HCT116 (cell line): ENCODE measurements at regions of chr4 and their contacts with region 1.

Region 1: DNA sequence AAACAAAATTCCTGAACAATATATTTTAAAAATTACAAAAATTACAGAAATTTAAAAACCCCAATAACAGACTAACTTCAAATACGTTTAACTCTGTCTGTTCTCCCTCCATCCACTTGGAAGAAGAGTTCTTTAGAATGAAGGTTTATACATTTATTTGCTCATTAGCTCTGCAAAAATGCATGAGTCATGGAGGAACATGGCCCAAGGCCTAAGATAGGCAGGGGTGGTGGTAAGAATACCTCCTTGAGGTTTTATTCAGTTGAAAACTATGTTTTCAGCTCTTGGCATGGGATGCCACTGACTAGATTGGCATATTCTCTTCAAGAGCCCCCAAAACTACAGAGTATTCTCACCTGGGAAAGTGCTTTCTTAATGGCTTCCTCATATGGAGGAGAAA is 8.8 kb upstream of the LRRC66 start:
- DNase-seq: no peak
- ATAC-seq: no peak
- H3K4me3 ChIP-seq: no peak overlapping the region
- H3K27ac ChIP-seq: no peak overlapping the region
- H3K4me1 ChIP-seq: no peaks in the 10 kb centered on the region; a peak in 1 of 4 replicates
- H3K27me3 ChIP-seq: no peaks in the 10 kb centered on the region
- CTCF ChIP-seq: no peak
- POLR2A ChIP-seq: no peak
- RAD21 ChIP-seq: no peak

Region 2: GRCh38 chr4:51831133-51831532 is 197.8 kb before region 1 on chr4:
- CTCF ChIA-PET with region 1: interaction called, 7 read pairs
- POLR2A ChIA-PET with region 1: no interaction called
- RAD21 ChIA-PET with region 1: no interaction called
- intact Hi-C with region 1: loop called (anchors 1 kb)
- DNase-seq: peak; percentile 36
- ATAC-seq: peak; percentile 94
- H3K4me3 ChIP-seq: no peak overlapping the region
- H3K27ac ChIP-seq: no peak overlapping the region
- H3K4me1 ChIP-seq: no peaks in the 10 kb centered on the region
- H3K27me3 ChIP-seq: peaks cover 23% of the 10 kb centered on the region
- CTCF ChIP-seq: peak; percentile 53 to 79 (median 74); a peak in 5 of 6 replicates
- POLR2A ChIP-seq: no peak
- RAD21 ChIP-seq: peak; percentile 83

Region 3: DNA sequence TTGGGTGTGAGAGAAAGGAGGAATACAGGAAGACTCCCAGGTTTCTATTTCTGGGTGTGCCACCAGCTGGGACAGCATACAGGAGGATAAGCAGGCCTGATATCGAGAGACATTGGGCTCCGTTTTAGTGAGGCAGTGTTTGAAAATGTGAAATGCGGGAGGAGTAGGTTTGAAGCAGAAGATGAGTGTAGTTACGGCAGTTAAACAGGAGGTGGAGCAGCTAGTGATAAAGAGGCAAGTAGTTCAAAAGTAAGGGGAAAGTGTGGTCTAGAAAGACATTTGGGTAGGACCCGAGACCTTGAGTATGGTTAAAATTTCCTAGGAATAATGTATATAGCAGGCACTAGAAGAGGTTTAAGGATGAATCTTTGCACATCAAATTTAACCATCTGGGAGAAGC is 143.6 kb before region 1 on chr4:
- CTCF ChIA-PET with region 1: interaction called, 4 read pairs
- POLR2A ChIA-PET with region 1: no interaction called
- RAD21 ChIA-PET with region 1: no interaction called
- intact Hi-C with region 1: loop called (anchors 1 kb)
- DNase-seq: peak; percentile 13
- ATAC-seq: peak; percentile 80
- H3K4me3 ChIP-seq: no peak overlapping the region
- H3K27ac ChIP-seq: no peak overlapping the region
- H3K4me1 ChIP-seq: no peaks in the 10 kb centered on the region
- H3K27me3 ChIP-seq: no peaks in the 10 kb centered on the region
- CTCF ChIP-seq: peak in 2 of 3 experiments; percentile 36 to 53; a peak in 4 of 6 replicates
- POLR2A ChIP-seq: no peak
- RAD21 ChIP-seq: no peak; the same call in 1 of the 2 replicates

Region 4: DNA sequence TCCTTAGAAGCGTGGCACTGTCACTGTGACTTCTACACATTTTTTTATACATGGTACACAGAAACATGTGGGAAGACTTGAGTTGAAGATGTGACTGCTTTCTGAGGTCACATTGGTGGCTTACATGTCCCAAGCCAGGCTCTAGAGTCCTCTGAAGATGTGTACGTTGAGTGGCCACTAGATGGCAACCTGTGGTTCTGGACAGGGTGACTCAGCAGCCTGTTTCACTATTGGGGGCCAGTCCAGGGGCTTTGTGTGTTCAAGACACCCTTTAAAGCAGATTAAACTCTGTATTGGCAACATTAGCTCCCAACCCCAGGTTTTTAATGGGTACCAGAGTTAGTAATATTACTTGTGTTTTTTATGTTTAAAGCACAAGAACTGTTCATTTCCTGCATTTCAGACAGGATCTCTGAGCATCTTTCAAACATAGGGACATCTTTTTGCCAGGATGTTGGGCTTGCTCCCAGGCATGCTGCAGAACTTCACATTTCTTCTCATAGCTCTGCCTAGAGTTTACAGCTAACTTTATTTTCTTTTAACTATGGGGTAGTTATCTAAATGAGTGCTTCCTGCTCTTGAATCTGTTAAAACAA is 133.1 kb before region 1 on chr4:
- CTCF ChIA-PET with region 1: no interaction called
- POLR2A ChIA-PET with region 1: no interaction called
- RAD21 ChIA-PET with region 1: no interaction called
- intact Hi-C with region 1: loop called (anchors 5 kb)
- DNase-seq: peak; percentile 45
- ATAC-seq: peak; percentile 99
- H3K4me3 ChIP-seq: no peak overlapping the region
- H3K27ac ChIP-seq: peak overlapping the region; percentile 15; the same call in 1 of the 2 replicates
- H3K4me1 ChIP-seq: peaks cover 0 to 8% of the 10 kb centered on the region in 2 experiments; a peak in 2 of 4 replicates
- H3K27me3 ChIP-seq: no peaks in the 10 kb centered on the region
- CTCF ChIP-seq: peak; percentile 33 to 86 (median 85); a peak in 5 of 6 replicates
- POLR2A ChIP-seq: no peak
- RAD21 ChIP-seq: peak; percentile 43

Region 5: GRCh38 chr4:52116641-52117040 is 87.7 kb after region 1 on chr4:
- CTCF ChIA-PET with region 1: no interaction called
- POLR2A ChIA-PET with region 1: no interaction called
- RAD21 ChIA-PET with region 1: no interaction called
- intact Hi-C with region 1: no loop called
- DNase-seq: no peak
- ATAC-seq: no peak
- H3K4me3 ChIP-seq: no peak overlapping the region
- H3K27ac ChIP-seq: no peak overlapping the region
- H3K4me1 ChIP-seq: no peaks in the 10 kb centered on the region
- H3K27me3 ChIP-seq: no peaks in the 10 kb centered on the region
- CTCF ChIP-seq: no peak
- POLR2A ChIP-seq: no peak
- RAD21 ChIP-seq: no peak

Region 6: DNA sequence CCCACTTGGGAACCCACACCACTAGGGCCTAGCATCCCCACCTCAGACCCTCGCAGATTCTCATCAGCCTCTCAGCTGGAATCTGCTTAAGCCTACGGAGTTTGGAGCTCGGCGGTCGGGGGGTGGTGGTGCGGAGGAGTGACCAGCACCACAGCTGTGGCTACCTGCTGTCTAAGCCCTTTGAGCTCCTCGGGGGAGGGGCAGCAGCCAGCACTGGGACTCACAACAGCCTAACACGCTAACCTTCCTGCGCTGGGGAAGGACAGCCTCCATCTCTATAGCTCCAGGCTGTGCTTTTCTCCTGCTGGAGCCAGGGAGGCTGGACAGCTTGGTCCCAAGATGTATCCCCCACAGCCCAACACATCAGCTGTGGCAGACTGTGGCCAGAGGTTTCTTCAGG is 348.6 kb after region 1 on chr4:
- CTCF ChIA-PET with region 1: no interaction called
- POLR2A ChIA-PET with region 1: no interaction called
- RAD21 ChIA-PET with region 1: no interaction called
- intact Hi-C with region 1: no loop called
- DNase-seq: no peak
- ATAC-seq: no peak
- H3K4me3 ChIP-seq: no peak overlapping the region
- H3K27ac ChIP-seq: no peak overlapping the region
- H3K4me1 ChIP-seq: no peaks in the 10 kb centered on the region
- H3K27me3 ChIP-seq: peaks cover 20% of the 10 kb centered on the region
- CTCF ChIP-seq: no peak
- POLR2A ChIP-seq: no peak
- RAD21 ChIP-seq: no peak